OCI-LY7 (cell line): ENCODE measurements at regions of chrX and their contacts with region 1.

Region 1: GRCh38 chrX:40468033-40468846 is 112.5 kb upstream of the ATP6AP2 start:
- DNase-seq: peak; percentile 48
- H3K4me3 ChIP-seq: no peak overlapping the region
- H3K27ac ChIP-seq: no peak overlapping the region
- H3K4me1 ChIP-seq: peaks cover 10% of the 10 kb centered on the region
- CTCF ChIP-seq: peak; percentile 56

Region 2: GRCh38 chrX:39652336-39653131 is 815.7 kb before region 1 on chrX:
- CTCF ChIA-PET with region 1: no interaction called
- POLR2A ChIA-PET with region 1: no interaction called
- intact Hi-C with region 1: loop called (anchors 10 kb)
- DNase-seq: peak; percentile 56
- H3K4me3 ChIP-seq: no peak overlapping the region
- H3K27ac ChIP-seq: no peak overlapping the region
- H3K4me1 ChIP-seq: no peaks in the 10 kb centered on the region
- CTCF ChIP-seq: peak; percentile 69

Region 3: GRCh38 chrX:39814391-39814790 is 653.8 kb before region 1 on chrX:
- CTCF ChIA-PET with region 1: no interaction called
- POLR2A ChIA-PET with region 1: no interaction called
- intact Hi-C with region 1: loop called (anchors 5 kb)
- DNase-seq: peak; percentile 53
- H3K4me3 ChIP-seq: no peak overlapping the region
- H3K27ac ChIP-seq: no peak overlapping the region
- H3K4me1 ChIP-seq: peaks cover 16% of the 10 kb centered on the region
- CTCF ChIP-seq: peak; percentile 74

Region 4: DNA sequence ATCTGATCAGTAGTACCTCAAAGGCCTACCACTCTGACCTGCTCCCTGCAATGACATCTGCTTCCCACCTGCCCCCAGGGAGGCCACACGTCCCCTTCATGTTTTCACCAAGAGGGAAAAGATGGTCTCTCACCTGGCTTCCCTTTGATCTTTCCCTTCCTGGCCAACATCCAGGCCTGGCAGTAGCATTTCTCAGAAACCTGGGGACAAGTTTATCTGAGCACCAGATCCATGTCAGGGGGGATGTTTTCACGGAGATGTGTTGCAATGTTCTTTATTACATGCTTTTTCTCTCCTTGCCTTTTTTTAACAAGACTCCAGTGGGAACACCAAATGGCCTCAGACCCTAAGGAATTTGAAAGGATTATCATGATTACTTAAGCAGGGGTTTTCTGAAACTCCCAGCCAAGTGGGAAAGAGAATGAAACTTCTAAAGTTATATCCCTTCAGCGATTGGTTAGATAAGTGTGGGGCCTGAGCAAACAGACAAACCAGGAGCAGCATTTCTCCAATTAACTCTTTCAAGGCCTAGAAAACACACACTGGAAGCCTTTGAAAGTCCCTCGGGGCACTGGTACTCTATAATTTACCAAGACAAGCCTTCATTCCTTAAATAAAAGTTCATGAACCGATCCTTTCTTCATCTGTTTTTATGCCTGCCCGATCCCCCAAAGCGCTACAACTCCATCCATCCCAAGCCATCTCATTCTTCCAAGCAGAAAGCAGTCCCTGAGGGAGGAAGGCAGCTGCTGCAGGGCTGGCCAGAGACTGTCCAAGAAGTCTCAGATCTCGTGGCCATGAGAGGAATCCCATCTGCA is 464.6 kb before region 1 on chrX:
- CTCF ChIA-PET with region 1: no interaction called
- POLR2A ChIA-PET with region 1: no interaction called
- intact Hi-C with region 1: loop called (anchors 5 kb)
- DNase-seq: no peak
- H3K4me3 ChIP-seq: no peak overlapping the region
- H3K27ac ChIP-seq: no peak overlapping the region
- H3K4me1 ChIP-seq: peaks cover 10% of the 10 kb centered on the region
- CTCF ChIP-seq: no peak

Region 5: GRCh38 chrX:40349251-40349650 is 119.0 kb before region 1 on chrX:
- CTCF ChIA-PET with region 1: no interaction called
- POLR2A ChIA-PET with region 1: no interaction called
- intact Hi-C with region 1: no loop called
- DNase-seq: no peak
- H3K4me3 ChIP-seq: no peak overlapping the region
- H3K27ac ChIP-seq: no peak overlapping the region
- H3K4me1 ChIP-seq: no peaks in the 10 kb centered on the region
- CTCF ChIP-seq: no peak